GM23248 (cell line): ENCODE measurements at regions of chr3 and their contacts with region 1.

Region 1: DNA sequence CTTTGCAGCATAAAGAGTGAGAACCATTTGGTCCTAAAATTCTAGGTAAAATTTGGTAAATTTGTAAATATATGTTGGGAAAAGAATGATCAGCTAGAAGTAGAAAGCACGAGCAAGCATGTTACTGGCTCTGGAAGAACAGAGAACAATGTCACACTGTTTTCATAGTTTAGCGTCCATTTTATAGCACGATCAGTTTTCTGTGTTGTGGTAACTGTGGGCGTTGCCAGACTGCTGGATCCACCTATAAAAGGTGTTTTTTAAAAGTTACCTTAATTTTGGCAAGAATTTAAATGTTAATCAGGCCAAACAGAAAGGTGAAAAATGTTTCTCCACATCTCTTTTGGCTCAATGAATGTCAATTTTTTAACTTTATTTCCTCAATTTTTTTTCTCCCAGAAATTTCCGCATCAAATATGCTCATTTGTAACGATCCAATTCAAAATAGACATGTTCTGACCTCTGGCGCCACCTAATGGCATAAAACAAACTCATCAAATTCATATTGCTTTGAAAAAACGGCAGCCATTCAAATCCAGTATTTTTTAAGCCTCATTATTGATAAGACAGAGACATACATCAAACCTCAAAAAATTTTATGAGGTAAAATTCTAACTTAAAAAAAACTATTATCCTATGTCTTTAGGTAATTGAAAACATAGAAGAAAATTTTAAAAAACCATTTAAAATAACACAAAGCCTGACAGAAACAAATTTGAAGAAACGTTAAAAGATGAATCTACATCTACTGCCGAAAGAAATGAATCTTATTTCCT is 5.5 kb upstream of the GP5 start:
- DNase-seq: peak; percentile 74
- H3K4me3 ChIP-seq: no peak overlapping the region
- H3K27ac ChIP-seq: no peak overlapping the region
- H3K4me1 ChIP-seq: no peaks in the 10 kb centered on the region
- H3K27me3 ChIP-seq: no peaks in the 10 kb centered on the region

Region 2: DNA sequence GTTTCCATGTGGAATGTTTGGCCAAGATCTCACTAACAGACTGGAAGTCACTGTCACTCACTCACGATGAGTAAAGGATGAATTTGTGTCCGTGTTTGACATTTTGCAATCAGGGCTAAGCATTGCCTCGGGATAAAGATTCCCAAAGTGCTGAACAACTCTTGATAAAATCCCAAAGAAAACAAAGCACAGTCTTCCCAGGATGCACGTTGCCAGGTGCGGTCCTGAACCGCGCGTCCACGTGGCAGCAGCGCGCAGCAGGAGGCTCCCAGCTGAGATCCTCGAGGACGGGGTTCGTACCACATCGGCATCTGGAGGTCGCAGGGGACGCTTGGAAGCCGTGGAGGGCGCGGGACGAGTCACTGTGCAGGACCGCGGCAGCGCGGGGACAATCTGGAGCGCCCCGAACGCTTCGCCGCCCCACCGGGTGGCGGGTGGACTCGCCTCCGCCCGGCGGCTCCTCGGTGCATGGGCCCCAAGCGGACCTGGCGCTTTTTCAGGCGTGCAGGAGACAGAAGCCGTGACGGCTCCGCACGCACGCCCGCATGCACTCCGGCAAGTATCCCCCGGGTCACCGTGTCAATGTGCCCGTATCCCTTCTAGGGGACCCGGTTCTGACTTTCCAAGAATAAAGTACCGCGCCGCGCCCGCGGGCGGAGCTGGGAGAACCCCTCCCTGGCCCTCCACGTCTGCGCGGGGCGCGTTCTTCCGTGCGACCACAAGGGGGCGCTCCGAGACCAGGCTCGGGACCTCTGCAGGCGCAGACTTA is 71.2 kb before region 1 on chr3:
- in situ Hi-C with region 1: loop called (anchors 10 kb)
- DNase-seq: peak; percentile 78
- H3K4me3 ChIP-seq: peak overlapping the region; percentile 70
- H3K27ac ChIP-seq: peak overlapping the region; percentile 22
- H3K4me1 ChIP-seq: peaks cover 15% of the 10 kb centered on the region
- H3K27me3 ChIP-seq: no peaks in the 10 kb centered on the region